Right lobe of liver (tissue), 6 donors: ENCODE measurements at regions of chr1 and their contacts with region 1.

Region 1: GRCh38 chr1:151539990-151540981 is at the start of gene TUFT1:
- DNase-seq: peak; percentile 92 to 95 (median 93)
- ATAC-seq: peak; percentile 90 to 95 (median 93)
- H3K4me3 ChIP-seq: peak within 1 kb of the TSS; percentile 62 to 75 (median 69)
- H3K27ac ChIP-seq: peak within 1 kb of the TSS; percentile 63 to 77 (median 70)
- H3K4me1 ChIP-seq: peaks cover 0 to 19% (median 8%) of the 10 kb centered on the region in 4 donors
- H3K27me3 ChIP-seq: no peaks in the 10 kb centered on the region
- CTCF ChIP-seq: no peak
- POLR2A ChIP-seq: peak; percentile 93
- total RNA-seq, gene TUFT1: 1.6 to 8.0 (median 3.1) TPM

Region 2: GRCh38 chr1:151443846-151444782 is 96.2 kb before region 1 on chr1:
- intact Hi-C with region 1: loop called in 1 of 2 experiments (anchors 10 kb)
- DNase-seq: peak in 1 of 3 donors; percentile 53
- ATAC-seq: peak; percentile 93 to 98 (median 95)
- H3K4me3 ChIP-seq: no peak overlapping the region
- H3K27ac ChIP-seq: peak overlapping the region in 1 of 3 donors; percentile 9
- H3K4me1 ChIP-seq: peaks cover 0 to 13% (median 0%) of the 10 kb centered on the region in 4 donors
- H3K27me3 ChIP-seq: no peaks in the 10 kb centered on the region
- CTCF ChIP-seq: peak; percentile 69 to 78 (median 73)
- POLR2A ChIP-seq: no peak

Region 3: DNA sequence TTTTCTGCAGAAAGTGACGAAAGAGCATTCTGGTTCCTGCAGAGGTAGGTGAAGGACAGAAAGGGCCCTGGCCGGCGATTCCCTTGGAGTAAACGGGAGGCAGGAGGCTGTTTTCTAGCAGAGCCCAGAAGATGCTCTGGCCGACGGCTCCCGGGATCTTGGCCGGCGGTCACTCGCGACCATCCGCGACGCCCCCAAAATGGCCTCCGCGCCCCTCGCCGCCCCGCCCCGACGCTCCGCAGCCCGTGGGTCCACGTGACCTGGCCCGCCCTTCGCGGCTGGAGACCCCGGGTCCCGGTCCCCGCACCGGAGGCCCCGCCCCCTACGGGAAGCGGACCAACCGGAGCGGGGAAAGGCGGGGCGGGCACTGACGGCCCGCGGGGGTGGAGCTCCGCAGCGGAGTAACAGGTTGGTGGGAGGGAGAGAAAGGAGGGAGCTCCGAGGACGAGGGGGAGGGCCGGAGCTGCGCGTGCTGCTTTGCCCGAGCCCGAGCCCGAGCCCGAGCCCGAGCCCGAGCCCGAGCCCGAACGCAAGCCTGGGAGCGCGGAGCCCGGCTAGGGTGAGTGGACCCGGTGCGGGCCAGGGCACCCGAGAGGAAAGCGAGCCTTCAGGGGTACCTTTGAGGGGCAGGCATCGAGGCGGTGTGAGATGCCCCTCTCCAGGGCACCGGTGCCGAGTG is 29.2 kb before region 1 on chr1 and contains the start of gene CGN:
- intact Hi-C with region 1: no loop called
- DNase-seq: peak; percentile 93 to 95 (median 95)
- ATAC-seq: peak; percentile 74 to 87 (median 77)
- H3K4me3 ChIP-seq: peak within 1 kb of the TSS; percentile 66 to 72 (median 67)
- H3K27ac ChIP-seq: peak within 1 kb of the TSS; percentile 76 to 97 (median 90)
- H3K4me1 ChIP-seq: peaks cover 0 to 48% (median 8%) of the 10 kb centered on the region in 4 donors
- H3K27me3 ChIP-seq: no peaks in the 10 kb centered on the region
- CTCF ChIP-seq: no peak
- POLR2A ChIP-seq: peak; percentile 77
- total RNA-seq, gene CGN: 15.9 to 65.4 (median 38.6) TPM

Region 4: GRCh38 chr1:151594143-151594625 is 53.9 kb after region 1 on chr1:
- intact Hi-C with region 1: loop called in 1 of 2 experiments (anchors 10 kb)
- DNase-seq: peak; percentile 87 to 91 (median 88)
- ATAC-seq: peak; percentile 87 to 98 (median 95)
- H3K4me3 ChIP-seq: no peak overlapping the region
- H3K27ac ChIP-seq: no peak overlapping the region
- H3K4me1 ChIP-seq: no peaks in the 10 kb centered on the region
- H3K27me3 ChIP-seq: no peaks in the 10 kb centered on the region
- CTCF ChIP-seq: peak; percentile 79 to 97 (median 96)
- POLR2A ChIP-seq: no peak

Region 5: DNA sequence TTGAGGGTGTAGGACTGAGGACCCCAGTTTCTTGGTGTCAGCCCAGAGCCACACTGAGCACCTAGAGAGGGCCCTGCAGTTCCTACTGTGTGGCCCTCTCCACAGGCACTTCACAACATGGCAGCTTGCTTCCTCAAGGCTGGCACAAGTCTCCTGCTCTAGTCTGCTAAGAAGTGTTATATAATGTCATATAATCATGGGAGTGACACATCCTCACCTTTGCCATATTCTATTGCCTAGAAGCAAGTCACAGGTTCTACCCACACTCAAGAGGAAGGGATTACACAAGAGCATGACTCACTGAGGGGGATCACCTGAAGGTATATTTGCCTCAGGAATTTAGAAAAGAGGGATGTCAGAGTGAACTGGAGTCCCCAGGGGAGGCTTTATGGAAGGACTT is 66.1 kb after region 1 on chr1:
- intact Hi-C with region 1: no loop called
- DNase-seq: no peak
- ATAC-seq: peak; percentile 6 to 50 (median 19)
- H3K4me3 ChIP-seq: no peak overlapping the region
- H3K27ac ChIP-seq: no peak overlapping the region
- H3K4me1 ChIP-seq: peaks cover 0 to 5% (median 2%) of the 10 kb centered on the region in 4 donors
- H3K27me3 ChIP-seq: no peaks in the 10 kb centered on the region
- CTCF ChIP-seq: no peak
- POLR2A ChIP-seq: no peak